ENCODE measurements at regions of chr3 and their contacts with region 1.

Region 1: DNA sequence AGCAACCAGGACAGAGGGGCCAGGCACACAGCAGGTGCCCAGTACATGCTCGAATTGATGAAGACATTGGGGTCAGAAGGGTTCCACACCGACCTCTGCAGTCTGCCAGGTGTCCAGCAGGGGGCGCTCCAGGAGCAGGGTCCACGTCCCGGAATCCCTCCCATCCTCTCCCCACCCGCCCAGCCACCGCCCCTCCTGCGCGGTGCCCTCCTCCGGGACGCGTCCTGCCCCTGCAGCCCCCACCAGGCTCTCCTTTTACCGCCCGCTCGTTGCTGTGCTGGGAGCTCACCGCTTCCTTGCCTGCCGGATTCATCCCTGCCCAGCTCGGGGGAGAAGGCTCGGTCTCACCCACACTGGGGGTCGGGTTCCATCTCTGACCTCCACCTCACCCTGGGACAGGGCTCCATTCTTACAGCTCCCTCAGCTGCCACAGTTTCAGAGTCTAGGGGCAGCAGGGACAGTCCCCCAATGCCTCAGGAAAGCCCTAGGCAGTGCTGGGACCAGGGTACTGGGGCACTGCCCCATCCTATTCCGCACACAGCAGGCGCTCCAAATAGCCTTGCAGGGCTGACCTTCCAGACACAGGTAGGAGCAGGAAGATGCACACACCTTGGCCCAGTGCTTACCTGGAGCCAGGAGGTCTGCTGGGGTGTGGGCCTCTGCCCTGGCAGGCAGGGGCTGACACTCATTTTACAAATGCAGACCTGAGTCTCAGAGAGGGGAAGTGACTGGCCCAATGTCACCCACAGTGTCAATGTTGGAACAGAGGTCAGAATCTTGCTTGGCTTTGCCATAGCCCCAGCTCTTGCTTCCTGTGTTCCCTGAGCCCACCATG is 31.0 kb downstream of the GRIP2 start:
- DNase-seq: peak; percentile 71 to 88 (median 73)
- ATAC-seq: peak; percentile 54 to 78 (median 71)
- H3K4me3 ChIP-seq: peak overlapping the region in 1 of 12 donors; percentile 11
- H3K27ac ChIP-seq: peak overlapping the region in 2 of 12 donors; percentile 23 to 38
- H3K4me1 ChIP-seq: peaks cover 0 to 27% (median 4%) of the 10 kb centered on the region in 12 donors
- H3K27me3 ChIP-seq: no peaks in the 10 kb centered on the region
- CTCF ChIP-seq: peak; percentile 88 to 99 (median 96)
- POLR2A ChIP-seq: no peak

Region 2: GRCh38 chr3:14602006-14602803 is 93.0 kb after region 1 on chr3:
- intact Hi-C with region 1: loop called in 1 of 10 experiments (anchors 10 kb)
- DNase-seq: no peak
- ATAC-seq: peak in 1 of 4 donors; percentile 19
- H3K4me3 ChIP-seq: peak overlapping the region in 10 of 12 donors; percentile 19 to 48 (median 34)
- H3K27ac ChIP-seq: no peak overlapping the region
- H3K4me1 ChIP-seq: peaks cover 0 to 17% (median 0%) of the 10 kb centered on the region in 12 donors
- H3K27me3 ChIP-seq: peaks cover 16 to 72% (median 27%) of the 10 kb centered on the region in 9 donors
- CTCF ChIP-seq: peak in 1 of 12 donors; percentile 13
- POLR2A ChIP-seq: no peak

Region 3: DNA sequence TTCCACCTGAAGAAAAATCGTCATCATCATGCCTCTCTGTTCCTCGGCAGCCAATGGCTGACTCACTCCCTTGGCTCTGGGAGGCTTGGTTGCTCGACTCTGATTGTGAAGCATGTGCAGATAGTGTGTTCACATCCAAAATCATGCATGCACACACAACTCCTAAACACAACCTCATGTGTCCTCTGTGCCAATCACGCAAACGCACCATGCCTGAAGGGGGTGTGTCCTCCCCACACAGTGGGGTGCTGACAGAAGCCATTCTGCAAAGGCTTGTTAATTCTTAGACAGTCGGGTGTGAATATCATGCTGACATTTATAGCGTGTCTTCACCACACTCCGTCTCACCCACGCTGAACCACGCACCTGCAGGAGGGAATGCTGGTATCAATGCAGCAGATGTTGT is 131.0 kb after region 1 on chr3:
- intact Hi-C with region 1: loop called in 2 of 10 experiments (anchors 10 kb)
- DNase-seq: no peak
- ATAC-seq: no peak
- H3K4me3 ChIP-seq: no peak overlapping the region
- H3K27ac ChIP-seq: no peak overlapping the region
- H3K4me1 ChIP-seq: no peaks in the 10 kb centered on the region
- H3K27me3 ChIP-seq: peaks cover 0 to 52% (median 12%) of the 10 kb centered on the region in 9 donors
- CTCF ChIP-seq: no peak
- POLR2A ChIP-seq: no peak

Region 4: DNA sequence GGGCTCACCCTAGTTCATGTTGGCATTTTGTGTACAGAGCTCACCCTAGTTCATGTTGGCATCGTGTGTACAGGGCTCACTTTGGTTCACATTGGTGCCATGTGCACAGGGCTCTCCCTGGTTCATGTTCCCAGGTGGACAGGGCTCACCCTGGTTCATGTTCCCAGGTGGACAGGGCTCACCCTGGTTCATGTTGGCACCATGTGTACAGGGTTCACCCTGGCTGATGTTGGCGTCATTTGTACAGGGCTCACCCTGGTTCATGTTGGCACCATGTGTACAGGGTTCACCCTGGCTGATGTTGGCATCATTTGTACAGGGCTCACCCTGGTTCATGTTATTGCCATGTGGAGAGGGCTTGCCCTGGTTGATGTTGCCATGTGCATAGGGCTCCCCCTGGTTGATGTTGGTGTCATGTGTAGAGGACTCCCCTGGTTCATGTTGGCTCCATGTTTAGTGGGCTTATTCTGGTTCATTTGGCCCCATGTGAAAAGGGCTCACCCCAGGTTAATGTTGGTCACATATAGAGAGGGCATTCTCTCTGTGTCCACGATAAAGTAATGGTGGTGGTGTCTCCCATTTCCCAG is 406.6 kb after region 1 on chr3:
- intact Hi-C with region 1: loop called in 3 of 10 experiments (anchors 5 to 10 kb)
- DNase-seq: no peak
- ATAC-seq: peak; percentile 6 to 47 (median 18)
- H3K4me3 ChIP-seq: no peak overlapping the region
- H3K27ac ChIP-seq: no peak overlapping the region
- H3K4me1 ChIP-seq: peaks cover 0 to 9% (median 1%) of the 10 kb centered on the region in 12 donors
- H3K27me3 ChIP-seq: no peaks in the 10 kb centered on the region
- CTCF ChIP-seq: peak in 7 of 12 donors; percentile 7 to 32 (median 14)
- POLR2A ChIP-seq: no peak